Dendritic cell treated with granulocyte-macrophage colony-stimulating factor and Interleukin-4, amounts not matched to agents 40 ng/mL and 50 ng/mL, for 4 days (primary cell): ENCODE measurements at regions of chr13 and their contacts with region 1.

Region 1: GRCh38 chr13:44141725-44142539 is 231.7 kb upstream of the SERP2 start:
- H3K4me3 Mint-ChIP-seq: peak overlapping the region; percentile 81
- H3K27ac Mint-ChIP-seq: peak overlapping the region; percentile 97
- H3K4me1 Mint-ChIP-seq: peaks cover 53% of the 10 kb centered on the region
- H3K27me3 Mint-ChIP-seq: peaks cover 16% of the 10 kb centered on the region

Region 2: DNA sequence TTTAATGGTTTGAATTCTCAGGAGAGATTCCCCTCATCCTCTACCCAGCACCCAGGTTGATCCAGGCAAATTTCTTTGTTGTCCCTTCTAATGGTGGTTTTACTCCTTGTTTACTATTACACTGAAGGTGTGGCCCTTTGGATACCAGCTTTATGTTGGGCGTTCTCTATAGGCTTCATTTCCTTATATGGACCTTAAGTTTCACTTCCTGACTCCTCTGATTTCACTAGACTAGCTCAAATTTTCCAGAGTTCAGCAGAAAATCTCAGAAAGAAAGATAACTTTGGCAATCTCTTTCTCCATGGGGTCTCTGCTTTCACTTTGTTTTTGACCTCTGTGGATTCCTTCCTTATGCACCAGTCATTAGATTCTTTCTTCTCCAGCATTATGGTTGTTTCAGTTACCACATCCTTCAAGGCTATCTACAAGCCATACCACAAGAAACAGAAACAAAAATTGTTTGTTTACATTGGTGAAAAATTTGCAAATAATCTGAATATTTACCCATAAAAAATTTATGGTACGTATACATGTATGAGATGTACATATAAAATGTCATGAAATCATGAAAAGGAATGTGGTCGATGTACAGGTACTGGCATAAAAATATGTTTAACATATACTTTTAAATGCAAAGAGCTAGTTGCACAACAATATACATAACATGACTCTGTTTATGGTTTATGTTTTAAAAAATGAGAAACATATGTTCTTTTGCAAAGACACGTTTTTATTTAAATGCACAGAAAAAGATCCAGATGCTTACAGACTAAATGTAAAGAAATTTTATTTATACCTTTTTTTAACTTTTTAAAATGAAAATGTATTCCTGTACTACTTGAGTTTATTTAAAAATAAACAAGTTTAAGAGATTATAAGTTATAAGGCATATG is 49.6 kb before region 1 on chr13:
- intact Hi-C with region 1: loop called (anchors 1 kb)
- H3K4me3 Mint-ChIP-seq: no peak overlapping the region
- H3K27ac Mint-ChIP-seq: no peak overlapping the region
- H3K4me1 Mint-ChIP-seq: peaks cover 55% of the 10 kb centered on the region
- H3K27me3 Mint-ChIP-seq: peaks cover 14% of the 10 kb centered on the region

Region 3: DNA sequence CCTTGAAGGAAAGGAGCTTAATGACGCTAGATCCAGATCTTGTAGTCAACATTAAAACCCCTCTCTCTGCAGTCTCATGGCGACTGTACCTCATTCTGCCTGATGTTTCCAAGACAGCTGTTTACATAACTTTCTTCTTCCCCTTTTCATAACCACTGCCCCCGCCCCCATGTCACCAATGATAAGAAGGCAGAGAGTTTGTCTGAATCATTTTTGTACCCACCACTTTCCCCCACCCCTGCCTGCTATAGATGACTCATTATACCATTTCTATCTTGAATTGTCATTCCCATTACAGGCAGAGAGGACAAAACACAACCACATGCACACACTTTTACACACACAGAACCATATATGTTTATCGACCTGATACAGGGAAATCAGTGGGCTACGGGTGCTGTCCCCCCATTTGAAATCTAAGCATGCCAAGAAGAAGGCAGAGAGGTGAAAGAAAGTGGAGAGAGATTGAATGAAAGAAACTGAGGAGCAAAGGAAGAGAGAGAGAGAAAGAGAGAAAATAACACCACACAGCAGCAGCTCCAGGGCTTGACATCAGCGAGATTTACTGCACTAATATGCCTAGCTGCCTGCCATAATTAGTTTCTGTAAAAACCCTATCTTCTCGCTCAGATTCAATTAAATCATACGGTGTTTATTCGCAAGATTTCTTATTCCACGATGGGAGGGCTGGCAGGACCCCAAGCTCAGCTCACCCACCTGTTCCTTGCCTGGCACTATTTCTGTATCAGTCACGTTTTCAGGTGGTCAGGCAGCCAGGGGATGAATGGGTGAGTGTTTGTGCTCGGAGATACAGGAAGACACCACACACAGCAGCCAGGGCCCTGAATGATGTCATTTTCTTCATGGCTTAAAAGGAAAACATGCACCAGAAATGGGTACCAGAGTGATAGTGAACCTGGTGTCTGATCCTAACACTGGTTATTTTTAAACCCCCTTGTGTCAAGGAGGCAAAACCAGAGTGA is 117.4 kb after region 1 on chr13:
- intact Hi-C with region 1: loop called (anchors 10 kb)
- H3K4me3 Mint-ChIP-seq: peak overlapping the region; percentile 71
- H3K27ac Mint-ChIP-seq: peak overlapping the region; percentile 70
- H3K4me1 Mint-ChIP-seq: peaks cover 22% of the 10 kb centered on the region
- H3K27me3 Mint-ChIP-seq: peaks cover 51% of the 10 kb centered on the region

Region 4: DNA sequence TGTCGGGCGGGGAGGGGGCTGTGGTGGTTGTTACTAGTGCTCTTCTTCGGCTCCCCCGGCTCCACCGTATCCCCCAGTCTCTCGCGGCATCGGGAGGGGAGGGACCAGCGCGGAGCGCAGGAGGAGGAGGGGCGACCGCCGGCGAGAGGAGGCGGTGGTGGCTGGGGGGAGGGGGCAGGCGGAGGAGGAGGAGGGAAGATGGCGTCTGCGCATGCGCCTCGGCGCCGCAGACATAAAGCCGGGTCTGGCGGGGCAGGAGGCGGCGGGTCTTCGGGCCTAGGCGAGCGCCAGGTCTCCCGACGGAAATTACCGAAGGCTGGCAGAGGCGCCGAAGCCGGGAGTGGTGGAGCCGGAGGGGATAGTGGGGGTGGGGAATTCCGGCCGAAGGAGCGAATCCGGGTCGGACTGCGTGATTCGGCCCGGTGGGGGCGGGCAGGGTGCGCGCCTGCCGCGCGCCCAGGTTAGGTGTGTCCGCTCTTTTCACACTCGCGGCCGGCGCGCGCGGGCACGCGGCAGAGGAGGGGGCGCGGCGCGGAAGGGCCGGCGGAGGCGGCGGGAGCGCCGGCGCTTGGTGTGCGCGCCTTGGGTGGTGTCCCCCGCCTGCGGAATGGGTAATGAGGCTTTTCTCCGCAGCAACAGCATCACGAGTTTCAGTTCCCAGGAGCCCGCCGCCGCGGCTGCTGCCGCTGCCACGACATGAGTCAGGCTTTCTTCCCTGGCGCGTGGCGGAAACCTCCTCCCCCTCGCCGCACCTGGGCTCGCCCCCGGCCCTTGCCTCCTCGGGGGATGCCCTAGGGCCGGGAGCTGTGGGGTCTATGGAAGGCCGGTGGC is 435.5 kb after region 1 on chr13:
- intact Hi-C with region 1: loop called (anchors 10 kb)
- H3K4me3 Mint-ChIP-seq: peak overlapping the region; percentile 83
- H3K27ac Mint-ChIP-seq: peak overlapping the region; percentile 98
- H3K4me1 Mint-ChIP-seq: peaks cover 43% of the 10 kb centered on the region
- H3K27me3 Mint-ChIP-seq: peaks cover 17% of the 10 kb centered on the region

Region 5: GRCh38 chr13:45231722-45232121 is 1089.8 kb after region 1 on chr13:
- intact Hi-C with region 1: no loop called
- H3K4me3 Mint-ChIP-seq: no peak overlapping the region
- H3K27ac Mint-ChIP-seq: no peak overlapping the region
- H3K4me1 Mint-ChIP-seq: peaks cover 6% of the 10 kb centered on the region
- H3K27me3 Mint-ChIP-seq: no peaks in the 10 kb centered on the region